ENCODE measurements at regions of chr3 and their contacts with region 1.

Region 1: DNA sequence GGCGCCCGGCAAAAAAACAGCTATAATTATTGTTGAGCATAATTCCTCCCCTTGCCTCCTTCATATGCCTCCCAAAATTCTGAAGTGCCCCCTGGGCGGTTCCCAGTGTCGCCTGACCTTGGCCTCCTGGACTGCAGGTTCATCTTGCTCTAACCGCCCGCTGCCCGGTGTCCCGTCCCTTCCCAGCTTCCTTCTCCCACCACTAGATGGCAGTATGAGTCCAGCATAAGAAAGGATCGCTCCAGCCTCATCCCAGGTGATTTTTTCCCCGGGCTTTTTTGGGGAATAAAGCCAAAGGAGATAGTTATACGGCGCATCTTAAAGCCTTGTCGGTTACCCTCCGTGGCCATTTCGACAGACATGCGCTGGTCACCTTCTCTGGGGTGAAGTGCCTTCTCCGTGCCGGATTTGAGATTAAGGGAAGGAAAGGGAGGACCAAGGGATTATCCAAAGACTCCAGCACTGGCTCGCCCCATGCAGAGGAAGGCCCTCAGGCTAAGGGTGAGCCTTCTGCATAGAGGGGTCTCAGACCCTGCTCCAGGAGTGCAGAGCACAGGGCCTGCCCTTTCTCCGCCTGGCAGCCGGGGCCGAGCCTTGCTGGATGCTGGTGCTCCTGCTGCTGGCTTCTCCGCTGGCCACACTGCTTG is 45.8 kb upstream of the TRA2B start:
- DNase-seq: peak; percentile 56
- ATAC-seq: peak; percentile 92 to 93

Region 2: DNA sequence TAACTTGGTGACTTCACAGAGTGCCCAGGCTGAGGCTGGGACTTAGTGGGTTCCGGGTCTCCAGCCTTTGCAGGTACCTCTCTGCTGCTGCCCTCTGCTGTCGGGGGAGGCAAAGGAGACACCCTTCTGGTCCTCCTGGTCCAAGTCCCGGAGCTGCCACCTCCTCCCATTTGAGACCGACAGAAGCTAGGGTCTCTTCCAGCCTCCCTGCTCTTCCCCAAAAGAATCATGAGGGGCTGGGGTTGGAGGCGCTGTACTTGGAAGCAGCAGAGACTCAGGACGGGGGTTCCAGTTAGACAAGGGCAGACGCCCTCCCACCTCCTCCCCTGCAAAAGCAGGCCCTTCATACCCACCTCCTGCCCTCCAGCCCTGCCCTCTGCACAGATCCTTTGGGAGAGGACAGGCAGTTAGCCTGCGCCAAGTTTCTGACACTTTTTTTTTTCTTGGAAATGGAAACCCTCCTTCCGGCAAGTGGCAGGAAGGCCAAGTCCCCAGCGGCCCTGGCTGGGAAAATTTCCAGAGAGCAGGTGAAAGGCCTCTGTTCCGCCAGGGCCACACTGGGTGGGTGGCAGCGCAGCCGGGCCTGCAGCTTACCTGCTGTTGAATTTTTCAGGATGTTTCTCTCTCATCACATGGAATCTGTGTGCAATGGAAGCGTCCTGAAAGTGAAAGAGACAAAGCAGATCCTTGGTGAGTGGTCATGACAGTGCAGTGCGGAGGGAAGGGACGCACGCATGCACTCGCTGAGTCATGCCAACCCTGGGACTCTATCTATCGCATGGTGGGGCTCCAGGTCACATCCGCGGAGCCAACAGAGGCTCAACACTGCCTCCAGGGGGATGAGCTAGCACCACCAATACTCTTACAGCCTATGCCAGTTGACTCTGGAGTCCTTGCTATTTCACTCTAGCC is 258.5 kb after region 1 on chr3:
- intact Hi-C with region 1: loop called (anchors 2 to 10 kb)
- DNase-seq: peak; percentile 82
- ATAC-seq: peak; percentile 95 to 98

Region 3: GRCh38 chr3:186259612-186260383 is 276.2 kb after region 1 on chr3:
- intact Hi-C with region 1: loop called in 1 of 2 experiments (anchors 5 kb)
- DNase-seq: peak; percentile 68
- ATAC-seq: peak; percentile 93 to 96

Region 4: DNA sequence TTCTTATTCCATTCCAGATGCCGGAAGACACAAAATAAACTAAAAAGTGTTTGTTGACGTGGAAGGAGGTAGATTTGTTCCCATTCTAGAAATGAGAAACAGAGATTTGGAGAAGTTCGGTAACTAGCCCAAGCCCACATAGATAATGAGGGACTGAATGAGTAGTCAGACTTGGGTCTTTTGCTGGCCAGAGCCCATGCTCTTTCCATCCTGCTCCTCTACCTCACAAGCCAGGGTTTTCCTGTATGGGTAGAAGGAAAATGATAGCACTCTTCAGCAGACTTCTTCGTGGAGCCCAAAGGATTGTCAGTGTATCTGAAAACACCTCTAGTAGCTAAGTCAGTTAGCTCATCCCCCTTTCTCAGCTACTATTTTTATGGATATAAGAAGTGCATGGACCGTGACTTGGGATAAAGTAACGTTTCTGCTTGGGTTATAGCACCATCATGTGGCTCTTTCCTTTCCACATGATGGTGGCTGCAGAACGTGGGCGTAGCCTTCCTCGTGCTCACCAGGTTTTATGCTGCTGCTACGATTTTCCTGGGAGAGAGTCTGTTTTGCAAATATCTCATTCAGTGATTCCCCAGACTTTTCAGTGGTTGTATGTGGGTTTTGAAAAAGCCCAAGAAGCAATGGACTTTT is 293.8 kb after region 1 on chr3:
- intact Hi-C with region 1: loop called in 1 of 2 experiments (anchors 5 kb)
- DNase-seq: peak; percentile 31
- ATAC-seq: peak; percentile 72 to 86

Region 5: GRCh38 chr3:186534113-186534669 is 550.6 kb after region 1 on chr3:
- intact Hi-C with region 1: loop called in 1 of 2 experiments (anchors 5 kb)
- DNase-seq: no peak
- ATAC-seq: peak in 1 of 2 donors; percentile 38

Region 6: GRCh38 chr3:186617038-186617946 is 633.7 kb after region 1 on chr3:
- intact Hi-C with region 1: loop called in 1 of 2 experiments (anchors 10 kb)
- DNase-seq: peak; percentile 91
- ATAC-seq: peak; percentile 97 to 98